GM12878 (cell line): ENCODE measurements at regions of chr15 and their contacts with region 1.

Region 1: DNA sequence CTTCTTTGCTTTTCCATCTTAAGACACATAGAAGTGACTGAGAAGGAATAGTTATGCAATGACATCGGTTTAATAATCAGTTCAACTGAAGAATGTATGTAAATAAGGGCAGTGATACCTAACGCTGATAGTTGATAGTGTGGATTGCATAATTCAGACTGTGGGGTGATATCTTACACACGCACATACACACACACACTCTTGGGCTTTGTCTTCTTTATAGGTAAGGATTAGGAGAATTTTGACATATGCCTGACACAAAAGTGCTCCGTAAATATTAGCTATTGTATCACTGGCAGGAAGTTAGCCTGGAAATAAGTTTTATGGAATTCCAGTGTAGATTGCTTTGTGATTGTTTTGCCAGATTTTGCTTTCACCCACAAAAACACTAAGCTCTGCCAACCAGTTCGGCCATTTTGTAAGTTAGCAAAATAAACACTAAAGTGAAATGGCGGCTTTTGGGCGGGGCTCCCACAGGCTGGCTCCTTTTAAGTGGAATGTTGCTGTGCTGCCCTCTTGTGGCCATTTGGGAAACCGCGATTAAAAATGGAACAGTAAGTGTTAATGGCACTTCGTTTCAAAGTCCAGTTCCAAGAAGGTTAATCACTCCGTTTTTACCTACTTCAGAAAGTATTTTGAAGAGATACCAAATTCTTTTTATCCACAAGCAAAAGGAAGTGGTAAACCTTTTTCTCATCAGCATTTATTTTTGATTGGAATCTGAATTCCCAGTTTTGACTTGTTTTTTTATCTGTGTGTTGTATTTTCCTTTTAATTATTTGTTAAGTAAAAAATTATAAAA is 17.7 kb downstream of the CHD2 start:
- DNase-seq: peak; percentile 80
- ATAC-seq: peak; percentile 52
- H3K4me3 ChIP-seq: no peak overlapping the region
- H3K27ac ChIP-seq: peak overlapping the region; percentile 29; the same call in 1 of the 2 replicates
- H3K4me1 ChIP-seq: peaks cover 41% of the 10 kb centered on the region
- H3K27me3 ChIP-seq: no peaks in the 10 kb centered on the region
- CTCF ChIP-seq: peak; percentile 71 to 86 (median 84)
- EP300 ChIP-seq: 0 out of 4 replicates have a peak, but pooled peaks of 1 of the 2 experiments have one; percentile 12
- POLR2A ChIP-seq: no peak
- RAD21 ChIP-seq: peak; percentile 80

Region 2: DNA sequence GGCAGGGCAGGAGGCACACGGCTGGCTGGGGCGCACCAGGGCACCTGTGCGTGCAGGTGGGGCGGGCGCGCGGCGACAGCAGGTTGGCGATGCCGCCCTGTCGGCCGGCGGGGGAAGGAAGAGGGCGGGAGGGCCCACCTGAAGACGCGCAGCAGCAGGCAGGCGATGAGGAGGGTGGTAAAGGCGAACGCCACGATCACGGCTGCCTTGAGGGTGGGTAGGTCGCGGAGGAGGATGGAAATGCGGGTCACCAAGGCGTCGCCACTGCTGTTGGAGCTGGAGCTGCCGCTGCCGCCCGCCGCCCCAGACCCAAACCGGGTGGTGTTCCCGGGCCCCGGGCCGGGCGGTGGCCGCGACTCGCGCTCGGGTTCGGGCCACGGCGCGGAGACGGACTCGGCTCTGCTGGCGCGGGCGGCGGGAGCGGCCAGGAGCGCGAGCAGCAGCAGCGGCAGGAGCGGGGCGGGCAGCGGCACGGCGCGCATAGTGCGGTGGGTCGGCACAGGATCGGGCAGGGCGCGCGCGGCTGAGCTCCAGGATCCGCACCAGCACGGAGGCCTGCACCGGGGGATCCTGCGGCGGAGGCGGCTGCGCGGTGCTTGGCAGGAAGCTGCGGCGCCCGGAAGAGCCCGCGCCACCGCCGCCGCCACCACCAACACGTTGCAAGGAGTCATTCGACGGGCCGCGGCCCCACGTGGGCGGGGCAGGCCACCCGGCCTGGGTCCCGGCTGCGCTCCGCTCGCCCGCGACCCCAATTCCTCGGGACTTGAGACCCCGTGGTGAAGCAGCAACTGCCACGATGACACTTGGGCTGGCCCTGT is 262.4 kb before region 1 on chr15 and contains the start of gene FAM174B:
- CTCF ChIA-PET with region 1: no interaction called
- POLR2A ChIA-PET with region 1: no interaction called
- RAD21 ChIA-PET with region 1: no interaction called
- SMC1A ChIA-PET with region 1: no interaction called
- in situ Hi-C with region 1: loop called (anchors 10 kb)
- intact Hi-C with region 1: loop called (anchors 10 kb)
- DNase-seq: no peak
- ATAC-seq: peak; percentile 76
- H3K4me3 ChIP-seq: peak within 1 kb of the TSS; percentile 65
- H3K27ac ChIP-seq: peak within 1 kb of the TSS; percentile 38
- H3K4me1 ChIP-seq: peaks cover 4% of the 10 kb centered on the region; the same call in 1 of the 2 replicates
- H3K27me3 ChIP-seq: no peaks in the 10 kb centered on the region
- CTCF ChIP-seq: peak in 1 of 3 experiments; percentile 17; a peak in 1 of 6 replicates
- EP300 ChIP-seq: no peak
- POLR2A ChIP-seq: peak; percentile 80
- RAD21 ChIP-seq: no peak
- polyA plus RNA-seq, gene FAM174B: 0.71 to 2.4 TPM

Region 3: GRCh38 chr15:92665100-92665555 is 252.7 kb before region 1 on chr15:
- CTCF ChIA-PET with region 1: interaction called, 4 read pairs
- POLR2A ChIA-PET with region 1: interaction called, 3 read pairs
- RAD21 ChIA-PET with region 1: no interaction called
- SMC1A ChIA-PET with region 1: no interaction called
- in situ Hi-C with region 1: no loop called
- intact Hi-C with region 1: loop called (anchors 10 kb)
- DNase-seq: peak; percentile 53
- ATAC-seq: peak; percentile 41
- H3K4me3 ChIP-seq: no peak overlapping the region
- H3K27ac ChIP-seq: peak overlapping the region; percentile 71
- H3K4me1 ChIP-seq: peaks cover 30% of the 10 kb centered on the region
- H3K27me3 ChIP-seq: no peaks in the 10 kb centered on the region
- CTCF ChIP-seq: no peak
- EP300 ChIP-seq: no peak
- POLR2A ChIP-seq: no peak
- RAD21 ChIP-seq: no peak

Region 4: DNA sequence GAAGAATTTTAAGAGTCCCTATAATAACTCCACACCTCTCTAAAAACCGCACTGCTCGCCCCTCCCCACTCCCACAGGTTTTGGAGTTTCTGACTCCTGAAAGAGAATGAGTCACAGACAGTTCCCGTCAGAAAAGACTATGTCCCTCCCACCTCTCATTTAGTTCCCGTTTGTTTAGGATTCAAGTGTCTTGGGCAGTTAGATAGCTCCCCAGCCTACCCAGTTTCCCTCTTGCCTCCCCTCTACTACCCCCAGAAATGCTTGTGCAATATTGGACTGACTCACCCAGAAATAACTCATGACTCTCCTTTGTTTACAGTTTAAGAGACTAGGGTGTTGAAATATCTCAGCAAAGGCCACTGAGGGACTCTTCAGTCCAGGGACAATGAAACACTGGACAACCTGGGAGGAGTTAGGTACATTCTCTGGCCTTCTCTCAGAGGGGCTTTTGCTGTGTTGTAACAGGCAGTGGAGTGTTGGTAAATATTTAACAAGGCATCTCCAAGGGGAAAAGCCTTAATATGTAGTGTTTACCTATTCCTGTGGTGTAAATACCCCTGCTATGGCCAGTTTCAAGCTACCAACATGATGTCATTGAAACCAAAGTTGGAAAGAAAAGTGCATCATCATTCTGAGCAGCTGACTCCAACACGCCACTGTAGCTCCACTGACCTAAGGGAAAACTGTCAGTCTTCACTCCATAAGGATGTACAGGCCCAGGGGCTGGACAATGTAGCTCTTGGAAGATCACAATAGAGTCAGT is 113.8 kb before region 1 on chr15:
- CTCF ChIA-PET with region 1: interaction called, 126 read pairs
- POLR2A ChIA-PET with region 1: interaction called, 79 read pairs
- RAD21 ChIA-PET with region 1: interaction called, 128 read pairs
- SMC1A ChIA-PET with region 1: interaction called, 150 read pairs
- in situ Hi-C with region 1: loop called (anchors 5 kb)
- intact Hi-C with region 1: loop called (anchors 1 kb)
- DNase-seq: peak; percentile 65
- ATAC-seq: peak; percentile 64
- H3K4me3 ChIP-seq: no peak overlapping the region
- H3K27ac ChIP-seq: peak overlapping the region; percentile 48
- H3K4me1 ChIP-seq: peaks cover 13% of the 10 kb centered on the region
- H3K27me3 ChIP-seq: no peaks in the 10 kb centered on the region
- CTCF ChIP-seq: no peak
- EP300 ChIP-seq: peak; percentile 72 to 81; a peak in 3 of 4 replicates
- POLR2A ChIP-seq: no peak
- RAD21 ChIP-seq: no peak

Region 5: DNA sequence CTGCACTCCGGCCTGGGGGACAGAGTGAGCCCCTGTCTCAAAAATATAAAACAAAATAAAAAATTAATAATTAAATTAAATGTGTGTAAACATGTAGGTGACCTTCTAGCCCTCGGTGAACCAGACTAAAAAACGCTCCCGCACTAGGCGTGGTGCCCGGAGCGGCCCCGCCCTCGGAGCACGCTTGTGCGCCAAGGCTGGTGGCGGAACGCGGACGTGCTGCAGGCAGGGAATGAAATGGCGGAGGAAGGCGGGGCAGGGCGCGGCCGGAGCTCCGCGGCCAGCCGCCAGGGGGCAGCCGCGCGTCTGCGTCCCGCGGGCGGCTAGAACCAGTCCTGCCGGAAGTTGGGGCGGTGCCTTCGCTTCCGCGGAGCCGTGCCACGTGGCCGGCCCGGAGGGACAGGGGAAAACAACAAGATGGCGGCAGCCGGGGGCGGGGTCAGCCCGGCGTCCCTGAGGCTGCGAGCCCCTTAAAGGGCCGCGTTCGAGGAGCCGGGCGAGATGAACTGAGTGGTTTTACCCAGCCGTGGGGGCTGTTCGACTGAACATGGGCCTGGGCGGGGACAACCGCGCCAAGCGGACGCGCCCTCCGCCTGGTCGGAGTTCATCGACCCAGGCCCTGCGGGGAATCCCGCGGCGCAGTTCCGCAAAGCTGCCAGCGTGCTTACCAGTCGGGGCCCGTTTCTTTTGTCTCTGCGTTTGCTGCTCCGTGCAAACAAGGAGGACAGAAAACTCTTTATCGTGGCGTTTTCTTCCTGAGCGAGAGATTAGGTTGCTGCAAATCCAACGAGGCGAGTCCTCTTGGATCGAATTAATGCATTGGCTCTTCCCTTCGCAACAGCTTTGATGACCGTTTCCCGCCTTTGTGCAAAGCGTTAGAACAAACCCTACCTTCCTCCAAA is 108.6 kb before region 1 on chr15:
- CTCF ChIA-PET with region 1: interaction called, 64 read pairs
- POLR2A ChIA-PET with region 1: interaction called, 79 read pairs
- RAD21 ChIA-PET with region 1: interaction called, 128 read pairs
- SMC1A ChIA-PET with region 1: interaction called, 150 read pairs
- in situ Hi-C with region 1: loop called (anchors 5 kb)
- intact Hi-C with region 1: loop called (anchors 1 kb)
- DNase-seq: peak; percentile 94
- ATAC-seq: peak; percentile 87
- H3K4me3 ChIP-seq: peak overlapping the region; percentile 79
- H3K27ac ChIP-seq: peak overlapping the region; percentile 100
- H3K4me1 ChIP-seq: peaks cover 2% of the 10 kb centered on the region
- H3K27me3 ChIP-seq: no peaks in the 10 kb centered on the region
- CTCF ChIP-seq: peak; percentile 75 to 99 (median 90); a peak in 5 of 6 replicates
- EP300 ChIP-seq: peak in 1 of 2 experiments; percentile 52; a peak in 2 of 4 replicates
- POLR2A ChIP-seq: peak; percentile 92
- RAD21 ChIP-seq: peak; percentile 61

Region 6: GRCh38 chr15:92903941-92904831 is 13.6 kb before region 1 on chr15:
- CTCF ChIA-PET with region 1: interaction called, 32 read pairs
- POLR2A ChIA-PET with region 1: interaction called, 184 read pairs
- RAD21 ChIA-PET with region 1: interaction called, 40 read pairs
- SMC1A ChIA-PET with region 1: interaction called, 49 read pairs
- in situ Hi-C with region 1: no loop called
- intact Hi-C with region 1: no loop called
- DNase-seq: peak; percentile 94
- ATAC-seq: peak; percentile 78
- H3K4me3 ChIP-seq: peak overlapping the region; percentile 95
- H3K27ac ChIP-seq: peak overlapping the region; percentile 98
- H3K4me1 ChIP-seq: peaks cover 13% of the 10 kb centered on the region
- H3K27me3 ChIP-seq: no peaks in the 10 kb centered on the region
- CTCF ChIP-seq: no peak
- EP300 ChIP-seq: peak in 1 of 2 experiments; percentile 49; a peak in 1 of 4 replicates
- POLR2A ChIP-seq: peak; percentile 93
- RAD21 ChIP-seq: no peak

Region 7: DNA sequence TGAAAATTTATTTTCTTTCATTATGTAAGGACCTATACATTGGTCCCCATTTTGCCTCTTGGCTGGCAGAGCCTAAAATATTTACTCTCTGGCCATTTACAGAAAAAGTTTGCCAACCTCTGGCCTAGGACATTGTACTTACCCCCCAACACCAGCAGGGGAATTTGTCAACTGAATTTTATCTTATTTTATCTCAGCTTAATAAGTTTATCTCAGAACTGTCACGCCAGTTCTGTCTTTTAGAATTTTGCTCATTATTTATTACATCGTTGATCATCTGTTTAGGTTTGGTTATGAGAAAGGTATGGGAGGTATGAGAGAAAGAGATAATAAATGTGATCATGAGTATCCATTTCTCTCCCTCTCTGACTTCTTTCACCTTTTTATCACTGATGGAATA is 20.6 kb after region 1 on chr15:
- CTCF ChIA-PET with region 1: interaction called, 3 read pairs
- POLR2A ChIA-PET with region 1: interaction called, 10 read pairs
- RAD21 ChIA-PET with region 1: interaction called, 3 read pairs
- SMC1A ChIA-PET with region 1: interaction called, 11 read pairs
- in situ Hi-C with region 1: no loop called
- intact Hi-C with region 1: no loop called
- DNase-seq: no peak
- ATAC-seq: peak; percentile 37; the same call in 2 of the 3 replicates
- H3K4me3 ChIP-seq: no peak overlapping the region
- H3K27ac ChIP-seq: no peak overlapping the region
- H3K4me1 ChIP-seq: no peaks in the 10 kb centered on the region
- H3K27me3 ChIP-seq: no peaks in the 10 kb centered on the region
- CTCF ChIP-seq: 0 out of 6 replicates have a peak, but pooled peaks of 2 of the 3 experiments have one; percentile 14 to 23
- EP300 ChIP-seq: no peak
- POLR2A ChIP-seq: no peak
- RAD21 ChIP-seq: no peak

Region 8: GRCh38 chr15:92954578-92954977 is 36.8 kb after region 1 on chr15:
- CTCF ChIA-PET with region 1: no interaction called
- POLR2A ChIA-PET with region 1: no interaction called
- RAD21 ChIA-PET with region 1: no interaction called
- SMC1A ChIA-PET with region 1: no interaction called
- in situ Hi-C with region 1: no loop called
- intact Hi-C with region 1: no loop called
- DNase-seq: no peak
- ATAC-seq: peak; percentile 50; the same call in 1 of the 3 replicates
- H3K4me3 ChIP-seq: no peak overlapping the region
- H3K27ac ChIP-seq: no peak overlapping the region
- H3K4me1 ChIP-seq: no peaks in the 10 kb centered on the region
- H3K27me3 ChIP-seq: no peaks in the 10 kb centered on the region
- CTCF ChIP-seq: peak; percentile 11 to 40 (median 33); a peak in 4 of 6 replicates
- EP300 ChIP-seq: no peak
- POLR2A ChIP-seq: no peak
- RAD21 ChIP-seq: no peak